CD14-positive monocyte (primary cell): ENCODE measurements at regions of chr14 and their contacts with region 1.

Region 1: DNA sequence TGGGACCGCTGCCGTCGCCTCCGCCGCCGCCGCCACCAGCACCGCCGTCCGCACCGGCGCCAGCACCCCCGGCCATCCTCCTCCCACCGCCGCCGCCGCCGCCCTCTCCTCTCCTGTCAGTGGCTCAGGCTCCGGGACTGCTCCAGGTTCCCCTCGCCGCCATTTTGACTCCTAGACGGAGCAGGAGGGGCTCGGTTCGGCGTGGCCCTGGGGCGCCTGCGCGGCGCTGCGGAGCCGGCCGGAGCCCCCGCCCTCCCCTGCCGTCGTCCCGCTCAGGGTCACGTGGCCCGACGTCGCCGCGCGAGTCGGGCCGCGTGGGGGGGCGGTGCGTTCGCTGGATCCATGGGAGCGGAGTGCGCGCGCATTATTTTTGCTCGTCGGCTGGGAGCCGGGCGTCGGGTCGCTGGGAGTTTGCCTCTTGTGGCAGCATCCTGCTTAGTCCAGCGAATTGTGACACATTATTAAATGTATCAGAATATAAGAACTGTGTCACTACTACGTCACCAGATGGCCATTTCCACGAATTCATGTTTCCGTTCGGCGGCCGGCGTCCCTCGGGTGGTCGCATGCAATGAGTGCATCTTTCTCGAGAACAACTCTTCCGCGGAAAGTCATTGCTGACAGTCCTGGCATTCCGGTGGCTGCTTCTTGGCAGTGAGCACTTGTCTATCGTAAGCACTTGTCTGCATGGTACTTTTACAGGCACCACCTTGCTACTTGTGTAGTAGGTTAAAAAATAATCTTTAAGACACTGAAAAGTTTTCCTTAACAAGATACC is at the start of gene BTBD7:
- DNase-seq: peak; percentile 96 to 99 (median 98)
- H3K4me3 ChIP-seq: peak within 1 kb of the TSS; percentile 65 to 99 (median 78)
- H3K4me3 Mint-ChIP-seq: peak within 1 kb of the TSS; percentile 90 to 93
- H3K27ac ChIP-seq: peak within 1 kb of the TSS; percentile 86 to 90
- H3K27ac Mint-ChIP-seq: peak within 1 kb of the TSS; percentile 97 to 99 (median 98)
- H3K4me1 ChIP-seq: peaks cover 22 to 25% of the 10 kb centered on the region in 2 donors
- H3K4me1 Mint-ChIP-seq: peaks cover 38% of the 10 kb centered on the region
- H3K27me3 ChIP-seq: no peaks in the 10 kb centered on the region
- H3K27me3 Mint-ChIP-seq: no peaks in the 10 kb centered on the region
- CTCF ChIP-seq: peak; percentile 18
- polyA plus RNA-seq, gene BTBD7: 8.3 to 8.6 (median 8.5) TPM

Region 2: GRCh38 chr14:93206793-93207467 is 126.1 kb before region 1 on chr14 and contains the starts of genes GON7 and UBR7:
- intact Hi-C with region 1: loop called (anchors 10 kb)
- DNase-seq: peak; percentile 93 to 96 (median 94)
- H3K4me3 ChIP-seq: peak within 1 kb of the TSS; percentile 58 to 90 (median 76)
- H3K4me3 Mint-ChIP-seq: peak within 1 kb of the TSS; percentile 93 to 97
- H3K27ac ChIP-seq: peak within 1 kb of the TSS; percentile 67 to 87
- H3K27ac Mint-ChIP-seq: peak within 1 kb of the TSS; percentile 91 to 97 (median 97)
- H3K4me1 ChIP-seq: peaks cover 24 to 32% of the 10 kb centered on the region in 2 donors
- H3K4me1 Mint-ChIP-seq: peaks cover 37% of the 10 kb centered on the region
- H3K27me3 ChIP-seq: no peaks in the 10 kb centered on the region
- H3K27me3 Mint-ChIP-seq: peaks cover 0 to 3% (median 1%) of the 10 kb centered on the region in 3 donors
- CTCF ChIP-seq: peak; percentile 46
- polyA plus RNA-seq, gene GON7: 4.8 to 24.0 (median 22.7) TPM
- polyA plus RNA-seq, gene UBR7: 8.2 to 16.7 (median 14.0) TPM

Region 3: GRCh38 chr14:93381644-93382043 is 48.6 kb after region 1 on chr14:
- intact Hi-C with region 1: no loop called
- DNase-seq: no peak
- H3K4me3 ChIP-seq: no peak overlapping the region
- H3K4me3 Mint-ChIP-seq: no peak overlapping the region
- H3K27ac ChIP-seq: no peak overlapping the region
- H3K27ac Mint-ChIP-seq: no peak overlapping the region
- H3K4me1 ChIP-seq: no peaks in the 10 kb centered on the region
- H3K4me1 Mint-ChIP-seq: peaks cover 3% of the 10 kb centered on the region
- H3K27me3 ChIP-seq: no peaks in the 10 kb centered on the region
- H3K27me3 Mint-ChIP-seq: peaks cover 4 to 7% (median 6%) of the 10 kb centered on the region in 3 donors
- CTCF ChIP-seq: no peak

Region 4: GRCh38 chr14:93527068-93527668 is 194.1 kb after region 1 on chr14:
- intact Hi-C with region 1: loop called (anchors 10 kb)
- DNase-seq: peak; percentile 89 to 98 (median 96)
- H3K4me3 ChIP-seq: no peak overlapping the region
- H3K4me3 Mint-ChIP-seq: peak overlapping the region in 1 of 2 donors; percentile 46
- H3K27ac ChIP-seq: peak overlapping the region; percentile 54 to 82
- H3K27ac Mint-ChIP-seq: peak overlapping the region; percentile 77 to 88 (median 85)
- H3K4me1 ChIP-seq: peaks cover 14 to 24% of the 10 kb centered on the region in 2 donors
- H3K4me1 Mint-ChIP-seq: peaks cover 20% of the 10 kb centered on the region
- H3K27me3 ChIP-seq: no peaks in the 10 kb centered on the region
- H3K27me3 Mint-ChIP-seq: peaks cover 0 to 4% (median 3%) of the 10 kb centered on the region in 3 donors
- CTCF ChIP-seq: no peak

Region 5: GRCh38 chr14:93533472-93534241 is 200.6 kb after region 1 on chr14:
- intact Hi-C with region 1: loop called (anchors 10 kb)
- DNase-seq: peak; percentile 74 to 88 (median 87)
- H3K4me3 ChIP-seq: peak overlapping the region in 1 of 3 experiments; percentile 25
- H3K4me3 Mint-ChIP-seq: peak overlapping the region in 1 of 2 donors; percentile 39
- H3K27ac ChIP-seq: peak overlapping the region; percentile 41 to 72
- H3K27ac Mint-ChIP-seq: peak overlapping the region; percentile 58 to 91 (median 88)
- H3K4me1 ChIP-seq: peaks cover 35 to 36% of the 10 kb centered on the region in 2 donors
- H3K4me1 Mint-ChIP-seq: peaks cover 40% of the 10 kb centered on the region
- H3K27me3 ChIP-seq: no peaks in the 10 kb centered on the region
- H3K27me3 Mint-ChIP-seq: peaks cover 0 to 5% (median 2%) of the 10 kb centered on the region in 3 donors
- CTCF ChIP-seq: no peak

Region 6: GRCh38 chr14:93959239-93960107 is 626.4 kb after region 1 on chr14:
- intact Hi-C with region 1: loop called in 1 of 2 experiments (anchors 10 kb)
- DNase-seq: peak; percentile 98 to 100 (median 99)
- H3K4me3 ChIP-seq: no peak overlapping the region
- H3K4me3 Mint-ChIP-seq: peak overlapping the region; percentile 52 to 80
- H3K27ac ChIP-seq: peak overlapping the region; percentile 71 to 91
- H3K27ac Mint-ChIP-seq: peak overlapping the region; percentile 93 to 99 (median 97)
- H3K4me1 ChIP-seq: peaks cover 77 to 85% of the 10 kb centered on the region in 2 donors
- H3K4me1 Mint-ChIP-seq: peaks cover 90% of the 10 kb centered on the region
- H3K27me3 ChIP-seq: no peaks in the 10 kb centered on the region
- H3K27me3 Mint-ChIP-seq: peaks cover 1 to 8% (median 5%) of the 10 kb centered on the region in 3 donors
- CTCF ChIP-seq: no peak

Region 7: GRCh38 chr14:94026173-94026888 is 693.3 kb after region 1 on chr14 and contains the start of gene OTUB2:
- intact Hi-C with region 1: no loop called
- DNase-seq: peak; percentile 91 to 97 (median 95)
- H3K4me3 ChIP-seq: peak within 1 kb of the TSS; percentile 33 to 77 (median 71)
- H3K4me3 Mint-ChIP-seq: peak within 1 kb of the TSS; percentile 69 to 81
- H3K27ac ChIP-seq: peak within 1 kb of the TSS in 1 of 2 donors; percentile 63
- H3K27ac Mint-ChIP-seq: peak within 1 kb of the TSS in 2 of 7 donors; percentile 62 to 73
- H3K4me1 ChIP-seq: peaks cover 36 to 44% of the 10 kb centered on the region in 2 donors
- H3K4me1 Mint-ChIP-seq: peaks cover 45% of the 10 kb centered on the region
- H3K27me3 ChIP-seq: no peaks in the 10 kb centered on the region
- H3K27me3 Mint-ChIP-seq: peaks cover 2 to 12% (median 3%) of the 10 kb centered on the region in 3 donors
- CTCF ChIP-seq: no peak
- polyA plus RNA-seq, gene OTUB2: 0.25 to 0.95 (median 0.28) TPM